Activated CD4-positive, alpha-beta T cell treated with anti-CD3 and anti-CD28 coated beads for 36 hours (primary cell): ENCODE measurements at regions of chr18 and their contacts with region 1.

Region 1: GRCh38 chr18:44066593-44066992 is 614.1 kb upstream of the SETBP1 start:
- DNase-seq: no peak
- ATAC-seq: no peak
- H3K4me3 Mint-ChIP-seq: no peak overlapping the region
- H3K27ac Mint-ChIP-seq: no peak overlapping the region
- H3K4me1 Mint-ChIP-seq: no peaks in the 10 kb centered on the region
- H3K27me3 Mint-ChIP-seq: no peaks in the 10 kb centered on the region

Region 2: DNA sequence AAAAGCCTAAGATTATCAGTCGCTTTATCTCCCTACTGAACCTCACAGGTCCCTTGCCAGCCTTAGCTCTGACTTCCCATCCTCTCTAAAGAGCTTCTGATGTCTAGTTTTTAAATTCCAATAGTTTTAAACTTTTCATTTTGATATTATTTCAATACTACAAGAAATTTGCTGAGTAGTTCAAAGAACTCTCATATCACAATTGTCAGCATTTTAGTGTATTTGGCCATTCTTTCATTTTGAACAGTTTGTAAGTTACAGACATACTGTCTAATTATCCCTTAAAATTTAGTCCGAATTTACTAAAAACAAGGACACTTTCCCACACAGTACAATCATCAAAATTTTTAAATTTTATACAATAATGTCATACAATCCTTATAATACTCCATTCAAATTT is 52.7 kb before region 1 on chr18:
- CTCF ChIA-PET with region 1: no interaction called
- POLR2A ChIA-PET with region 1: no interaction called
- intact Hi-C with region 1: no loop called
- DNase-seq: no peak
- ATAC-seq: no peak
- H3K4me3 Mint-ChIP-seq: no peak overlapping the region
- H3K27ac Mint-ChIP-seq: no peak overlapping the region
- H3K4me1 Mint-ChIP-seq: no peaks in the 10 kb centered on the region
- H3K27me3 Mint-ChIP-seq: no peaks in the 10 kb centered on the region

Region 3: GRCh38 chr18:44130376-44130942 is 63.9 kb after region 1 on chr18:
- CTCF ChIA-PET with region 1: no interaction called
- POLR2A ChIA-PET with region 1: interaction called, 17 read pairs
- intact Hi-C with region 1: no loop called
- DNase-seq: peak; percentile 14
- ATAC-seq: no peak
- H3K4me3 Mint-ChIP-seq: no peak overlapping the region
- H3K27ac Mint-ChIP-seq: no peak overlapping the region
- H3K4me1 Mint-ChIP-seq: no peaks in the 10 kb centered on the region
- H3K27me3 Mint-ChIP-seq: peaks cover 2% of the 10 kb centered on the region

Region 4: DNA sequence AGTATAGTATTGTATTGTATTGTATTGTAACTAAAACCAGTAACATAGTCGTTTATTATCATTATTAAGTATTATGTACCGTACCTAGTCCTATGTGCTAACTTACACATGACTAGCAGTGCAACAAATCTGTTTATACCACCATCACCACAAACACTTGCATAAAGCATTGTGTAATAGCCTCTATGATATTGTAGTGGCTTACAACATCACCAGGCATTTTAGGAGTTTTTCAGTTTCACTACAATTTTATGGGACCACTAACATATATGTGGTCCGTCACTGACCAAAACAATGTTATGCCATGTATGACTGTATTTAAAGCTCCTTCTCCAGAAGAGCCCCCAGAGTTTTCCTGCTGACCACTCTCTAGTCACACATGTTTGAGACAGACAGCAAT is 920.3 kb after region 1 on chr18:
- CTCF ChIA-PET with region 1: no interaction called
- POLR2A ChIA-PET with region 1: no interaction called
- intact Hi-C with region 1: no loop called
- DNase-seq: no peak
- ATAC-seq: no peak
- H3K4me3 Mint-ChIP-seq: no peak overlapping the region
- H3K27ac Mint-ChIP-seq: no peak overlapping the region
- H3K4me1 Mint-ChIP-seq: no peaks in the 10 kb centered on the region
- H3K27me3 Mint-ChIP-seq: no peaks in the 10 kb centered on the region